ENCODE measurements at regions of chr1 and their contacts with region 1.

Region 1: DNA sequence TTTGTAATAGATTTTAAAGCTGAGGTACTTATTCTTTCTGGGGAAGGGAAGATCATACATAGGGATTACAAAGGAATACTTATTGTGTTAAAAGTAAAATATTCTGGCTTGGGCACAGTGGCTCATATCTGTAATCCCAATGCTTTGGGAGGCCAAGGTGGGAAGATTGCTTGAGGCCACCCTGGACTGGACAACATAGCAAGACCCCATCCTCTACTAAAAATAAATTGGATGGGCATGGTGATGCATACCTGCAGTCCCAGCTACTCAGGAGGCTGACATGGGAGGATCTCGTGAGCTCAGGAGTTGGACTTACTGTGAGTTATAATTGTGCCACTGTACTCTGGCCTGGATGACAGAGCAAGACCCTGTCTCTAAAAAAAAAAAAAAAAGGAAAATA is 27.6 kb downstream of the GABPB2 start:
- DNase-seq: no peak
- ATAC-seq: no peak
- H3K4me3 ChIP-seq: no peak overlapping the region
- H3K4me3 Mint-ChIP-seq: no peak overlapping the region
- H3K27ac ChIP-seq: no peak overlapping the region
- H3K27ac Mint-ChIP-seq: no peak overlapping the region
- H3K4me1 ChIP-seq: no peaks in the 10 kb centered on the region
- H3K4me1 Mint-ChIP-seq: no peaks in the 10 kb centered on the region
- H3K27me3 ChIP-seq: no peaks in the 10 kb centered on the region
- H3K27me3 Mint-ChIP-seq: no peaks in the 10 kb centered on the region
- CTCF ChIP-seq: no peak

Region 2: GRCh38 chr1:151085953-151086559 is 12.1 kb before region 1 on chr1:
- CTCF ChIA-PET with region 1: interaction called, 14 read pairs
- POLR2A ChIA-PET with region 1: interaction called, 3 read pairs
- intact Hi-C with region 1: no loop called
- DNase-seq: no peak
- ATAC-seq: no peak
- H3K4me3 ChIP-seq: no peak overlapping the region
- H3K4me3 Mint-ChIP-seq: no peak overlapping the region
- H3K27ac ChIP-seq: no peak overlapping the region
- H3K27ac Mint-ChIP-seq: no peak overlapping the region
- H3K4me1 ChIP-seq: peaks cover 0 to 4% of the 10 kb centered on the region in 2 donors
- H3K4me1 Mint-ChIP-seq: peaks cover 5% of the 10 kb centered on the region
- H3K27me3 ChIP-seq: no peaks in the 10 kb centered on the region
- H3K27me3 Mint-ChIP-seq: no peaks in the 10 kb centered on the region
- CTCF ChIP-seq: no peak

Region 3: GRCh38 chr1:151130987-151131586 is 33.0 kb after region 1 on chr1:
- CTCF ChIA-PET with region 1: interaction called, 21 read pairs
- POLR2A ChIA-PET with region 1: no interaction called
- intact Hi-C with region 1: no loop called
- DNase-seq: peak; percentile 89
- ATAC-seq: peak; percentile 100
- H3K4me3 ChIP-seq: peak overlapping the region in 4 of 5 experiments; percentile 42 to 58 (median 51)
- H3K4me3 Mint-ChIP-seq: peak overlapping the region; percentile 89
- H3K27ac ChIP-seq: peak overlapping the region; percentile 46 to 53
- H3K27ac Mint-ChIP-seq: peak overlapping the region; percentile 92
- H3K4me1 ChIP-seq: peaks cover 6 to 15% of the 10 kb centered on the region in 2 donors
- H3K4me1 Mint-ChIP-seq: peaks cover 14% of the 10 kb centered on the region
- H3K27me3 ChIP-seq: peaks cover 0 to 4% (median 0%) of the 10 kb centered on the region in 4 experiments
- H3K27me3 Mint-ChIP-seq: no peaks in the 10 kb centered on the region
- CTCF ChIP-seq: no peak

Region 4: GRCh38 chr1:151146412-151147140 is 48.5 kb after region 1 on chr1 and contains the start of gene SEMA6C:
- CTCF ChIA-PET with region 1: interaction called, 227 read pairs
- POLR2A ChIA-PET with region 1: no interaction called
- intact Hi-C with region 1: no loop called
- DNase-seq: peak; percentile 86
- ATAC-seq: peak; percentile 100
- H3K4me3 ChIP-seq: peak within 1 kb of the TSS; percentile 59 to 86 (median 84)
- H3K4me3 Mint-ChIP-seq: peak within 1 kb of the TSS; percentile 94
- H3K27ac ChIP-seq: peak within 1 kb of the TSS in 1 of 2 donors; percentile 43
- H3K27ac Mint-ChIP-seq: peak within 1 kb of the TSS; percentile 20
- H3K4me1 ChIP-seq: peaks cover 15 to 19% of the 10 kb centered on the region in 2 donors
- H3K4me1 Mint-ChIP-seq: peaks cover 23% of the 10 kb centered on the region
- H3K27me3 ChIP-seq: peaks cover 0 to 20% (median 8%) of the 10 kb centered on the region in 4 experiments
- H3K27me3 Mint-ChIP-seq: peaks cover 9% of the 10 kb centered on the region
- CTCF ChIP-seq: no peak
- total RNA-seq, gene SEMA6C: 0.86 and 1.5 TPM in 2 replicates

Region 5: DNA sequence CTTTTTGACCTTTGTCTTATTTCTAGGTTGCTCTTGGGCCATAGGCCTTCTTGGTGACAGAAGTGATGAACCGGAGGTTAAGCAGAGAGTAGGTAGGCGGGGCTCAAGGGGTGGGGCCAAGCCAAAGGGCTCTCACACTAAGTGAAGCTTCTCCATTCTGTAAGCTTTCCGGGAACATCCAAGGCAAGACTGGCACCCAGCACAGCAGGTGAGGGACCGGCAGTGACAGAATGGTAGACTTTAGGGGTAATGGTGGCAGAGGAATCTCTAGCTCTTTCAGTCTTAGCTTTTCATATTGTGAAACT is 58.3 kb after region 1 on chr1 and contains the start of gene TNFAIP8L2:
- CTCF ChIA-PET with region 1: interaction called, 227 read pairs
- POLR2A ChIA-PET with region 1: interaction called, 12 read pairs
- intact Hi-C with region 1: loop called (anchors 1 kb)
- DNase-seq: peak; percentile 77
- ATAC-seq: peak; percentile 85
- H3K4me3 ChIP-seq: peak within 1 kb of the TSS; percentile 72 to 98 (median 72)
- H3K4me3 Mint-ChIP-seq: peak within 1 kb of the TSS; percentile 99
- H3K27ac ChIP-seq: peak within 1 kb of the TSS; percentile 29 to 79
- H3K27ac Mint-ChIP-seq: peak within 1 kb of the TSS; percentile 97
- H3K4me1 ChIP-seq: peaks cover 30 to 37% of the 10 kb centered on the region in 2 donors
- H3K4me1 Mint-ChIP-seq: peaks cover 41% of the 10 kb centered on the region
- H3K27me3 ChIP-seq: no peaks in the 10 kb centered on the region
- H3K27me3 Mint-ChIP-seq: no peaks in the 10 kb centered on the region
- CTCF ChIP-seq: no peak
- total RNA-seq, gene TNFAIP8L2: 14.9 and 17.6 TPM in 2 replicates

Region 6: DNA sequence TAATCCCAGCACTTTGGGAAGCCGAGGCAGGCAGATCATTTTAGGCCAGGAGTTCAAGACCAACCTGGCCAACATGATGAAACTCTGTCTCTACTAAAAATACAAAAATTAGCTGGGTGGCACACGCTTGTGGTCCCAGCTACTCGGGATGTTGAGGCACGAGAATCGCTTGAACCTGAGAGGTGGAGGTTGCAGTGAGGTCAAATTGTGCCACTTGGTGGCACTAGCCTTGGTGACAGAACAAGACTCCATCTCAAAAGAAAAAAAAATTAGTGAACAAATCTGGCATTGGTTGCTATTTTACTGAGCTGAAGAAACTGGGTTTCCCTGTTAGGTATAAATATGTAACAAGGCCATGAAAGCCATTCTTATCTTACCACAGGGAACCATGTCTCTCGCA is 129.5 kb after region 1 on chr1:
- CTCF ChIA-PET with region 1: no interaction called
- POLR2A ChIA-PET with region 1: no interaction called
- intact Hi-C with region 1: no loop called
- DNase-seq: no peak
- ATAC-seq: no peak
- H3K4me3 ChIP-seq: no peak overlapping the region
- H3K4me3 Mint-ChIP-seq: no peak overlapping the region
- H3K27ac ChIP-seq: no peak overlapping the region
- H3K27ac Mint-ChIP-seq: no peak overlapping the region
- H3K4me1 ChIP-seq: no peaks in the 10 kb centered on the region
- H3K4me1 Mint-ChIP-seq: no peaks in the 10 kb centered on the region
- H3K27me3 ChIP-seq: no peaks in the 10 kb centered on the region
- H3K27me3 Mint-ChIP-seq: no peaks in the 10 kb centered on the region
- CTCF ChIP-seq: no peak

Region 7: DNA sequence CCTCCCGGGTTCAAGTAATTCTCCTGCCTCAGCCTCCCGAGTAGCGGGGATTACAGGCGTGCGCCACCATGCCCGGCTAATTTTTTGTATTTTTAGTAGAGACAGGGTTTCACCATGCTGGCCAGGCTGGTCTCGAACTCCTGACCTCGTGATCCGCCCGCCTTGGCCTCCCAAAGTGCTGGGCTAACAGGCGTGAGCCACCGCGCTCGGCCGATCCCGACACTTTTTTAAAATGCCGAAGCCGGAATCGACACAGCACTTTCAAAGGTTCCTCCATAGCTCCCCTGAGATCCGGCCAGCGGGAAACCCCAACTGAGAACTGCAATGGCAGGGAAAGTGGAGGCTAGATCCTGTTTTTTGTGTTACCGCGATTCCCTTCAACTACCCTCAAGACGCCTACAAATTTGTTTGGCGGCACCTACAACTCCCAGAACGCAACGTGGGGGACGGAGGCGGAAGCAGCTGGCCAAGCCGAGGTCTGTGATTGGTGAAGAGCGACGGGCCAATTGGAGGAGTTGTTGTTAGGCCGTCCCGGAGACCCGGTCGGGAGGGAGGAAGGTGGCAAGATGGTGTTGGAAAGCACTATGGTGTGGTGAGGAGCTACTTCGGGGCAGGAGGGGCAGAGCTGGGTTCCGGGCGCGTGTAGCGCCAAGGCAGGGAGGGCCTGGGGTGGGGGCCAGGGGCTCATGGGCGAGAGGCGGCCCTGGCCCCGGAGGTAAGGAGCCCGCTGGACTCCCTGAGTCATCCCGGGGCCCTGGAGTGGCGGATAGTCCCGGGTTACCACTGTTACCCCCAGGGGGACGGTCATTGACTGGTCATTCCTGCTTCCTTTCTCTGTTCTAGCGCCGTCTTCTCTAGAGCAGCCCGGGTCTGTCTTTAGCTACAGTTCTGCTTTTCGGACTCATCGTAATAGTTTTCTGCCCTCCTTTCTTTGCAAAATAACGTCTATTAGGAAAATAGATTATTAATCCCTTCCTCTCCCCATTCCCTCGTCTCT is 156.4 kb after region 1 on chr1 and contains the start of gene PSMD4:
- CTCF ChIA-PET with region 1: interaction called, 21 read pairs
- POLR2A ChIA-PET with region 1: no interaction called
- intact Hi-C with region 1: loop called (anchors 1 kb)
- DNase-seq: peak; percentile 96
- ATAC-seq: peak; percentile 93
- H3K4me3 ChIP-seq: peak within 1 kb of the TSS; percentile 82 to 97 (median 84)
- H3K4me3 Mint-ChIP-seq: peak within 1 kb of the TSS; percentile 97
- H3K27ac ChIP-seq: peak within 1 kb of the TSS; percentile 66 to 85
- H3K27ac Mint-ChIP-seq: peak within 1 kb of the TSS; percentile 97
- H3K4me1 ChIP-seq: peaks cover 9 to 12% of the 10 kb centered on the region in 2 donors
- H3K4me1 Mint-ChIP-seq: peaks cover 30% of the 10 kb centered on the region
- H3K27me3 ChIP-seq: no peaks in the 10 kb centered on the region
- H3K27me3 Mint-ChIP-seq: no peaks in the 10 kb centered on the region
- CTCF ChIP-seq: no peak
- total RNA-seq, gene PSMD4: 142 and 169 TPM in 2 replicates